ENCODE measurements at regions of chr19 and their contacts with region 1.

Region 1: DNA sequence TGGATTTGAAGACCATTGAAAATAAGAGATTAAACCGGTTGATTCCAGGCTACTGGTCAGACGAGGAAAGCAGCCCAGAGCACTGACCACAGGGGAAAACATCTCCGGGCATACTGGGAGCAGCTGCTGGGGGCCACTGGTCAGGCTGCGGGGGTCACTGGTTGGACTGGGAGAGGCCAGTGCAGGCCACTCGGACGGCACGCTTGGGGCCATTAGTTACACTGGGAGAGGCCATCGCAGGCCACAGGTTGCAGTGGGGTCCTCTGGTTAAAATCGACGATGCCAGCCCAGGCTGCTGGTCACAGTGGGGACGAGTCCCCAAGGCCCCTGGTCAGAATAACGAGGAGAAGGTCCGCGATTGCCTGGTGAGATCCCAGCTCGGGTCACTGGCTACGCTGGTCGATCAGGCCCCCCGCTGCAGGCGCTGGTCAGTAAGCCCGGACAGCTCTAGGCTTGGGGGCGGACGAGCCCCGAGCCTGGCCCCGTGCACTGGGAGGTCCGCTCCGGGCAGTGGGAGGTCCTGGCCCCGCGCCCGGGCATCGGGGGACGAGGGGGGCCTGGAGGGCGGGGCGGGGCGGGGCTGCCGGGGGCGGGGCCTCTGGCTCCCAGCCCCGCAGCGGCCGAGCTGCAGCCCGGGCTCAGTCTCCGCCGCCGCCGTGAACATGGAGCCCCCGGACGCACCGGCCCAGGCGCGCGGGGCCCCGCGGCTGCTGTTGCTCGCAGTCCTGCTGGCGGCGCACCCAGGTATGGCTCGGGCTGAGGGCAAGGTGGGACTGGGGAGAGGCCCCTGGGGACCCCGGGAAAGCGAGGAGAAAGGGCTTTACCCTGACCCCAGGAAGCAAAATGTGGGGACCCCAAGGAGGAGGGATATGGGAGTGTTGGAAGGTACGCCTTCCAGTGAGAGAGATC is at the start of gene BCAM:
- DNase-seq: peak; percentile 91 to 94
- H3K4me3 ChIP-seq: peak within 1 kb of the TSS; percentile 43 to 73 (median 64)
- H3K27ac ChIP-seq: peak within 1 kb of the TSS; percentile 90 to 99 (median 95)
- H3K4me1 ChIP-seq: peaks cover 33 to 47% of the 10 kb centered on the region in 2 donors
- H3K27me3 ChIP-seq: no peaks in the 10 kb centered on the region
- CTCF ChIP-seq: no peak
- POLR2A ChIP-seq: peak in 1 of 2 donors; percentile 70
- total RNA-seq, gene BCAM: 156 to 391 (median 285) TPM

Region 2: GRCh38 chr19:44839276-44839675 is 30.6 kb after region 1 on chr19:
- intact Hi-C with region 1: loop called (anchors 2 kb)
- DNase-seq: no peak
- H3K4me3 ChIP-seq: no peak overlapping the region
- H3K27ac ChIP-seq: no peak overlapping the region
- H3K4me1 ChIP-seq: peaks cover 0 to 9% of the 10 kb centered on the region in 2 donors
- H3K27me3 ChIP-seq: no peaks in the 10 kb centered on the region
- CTCF ChIP-seq: no peak
- POLR2A ChIP-seq: no peak